RWPE1 (cell line): ENCODE measurements at regions of chr3 and their contacts with region 1.

Region 1: GRCh38 chr3:184250167-184250828 is 826 bp downstream of the EEF1AKMT4 start:
- DNase-seq: peak; percentile 87
- H3K27ac ChIP-seq: peak overlapping the region; percentile 95
- CTCF ChIP-seq: peak; percentile 89

Region 2: GRCh38 chr3:184261270-184261853 is 11.1 kb after region 1 on chr3 and contains the start of gene CAMK2N2:
- CTCF ChIA-PET with region 1: interaction called, 11 read pairs
- POLR2A ChIA-PET with region 1: no interaction called
- DNase-seq: peak; percentile 72
- H3K27ac ChIP-seq: peak within 1 kb of the TSS; percentile 48
- CTCF ChIP-seq: no peak